Head of caudate nucleus (tissue), 42 donors: ENCODE measurements at regions of chr19 and their contacts with region 1.

Region 1: DNA sequence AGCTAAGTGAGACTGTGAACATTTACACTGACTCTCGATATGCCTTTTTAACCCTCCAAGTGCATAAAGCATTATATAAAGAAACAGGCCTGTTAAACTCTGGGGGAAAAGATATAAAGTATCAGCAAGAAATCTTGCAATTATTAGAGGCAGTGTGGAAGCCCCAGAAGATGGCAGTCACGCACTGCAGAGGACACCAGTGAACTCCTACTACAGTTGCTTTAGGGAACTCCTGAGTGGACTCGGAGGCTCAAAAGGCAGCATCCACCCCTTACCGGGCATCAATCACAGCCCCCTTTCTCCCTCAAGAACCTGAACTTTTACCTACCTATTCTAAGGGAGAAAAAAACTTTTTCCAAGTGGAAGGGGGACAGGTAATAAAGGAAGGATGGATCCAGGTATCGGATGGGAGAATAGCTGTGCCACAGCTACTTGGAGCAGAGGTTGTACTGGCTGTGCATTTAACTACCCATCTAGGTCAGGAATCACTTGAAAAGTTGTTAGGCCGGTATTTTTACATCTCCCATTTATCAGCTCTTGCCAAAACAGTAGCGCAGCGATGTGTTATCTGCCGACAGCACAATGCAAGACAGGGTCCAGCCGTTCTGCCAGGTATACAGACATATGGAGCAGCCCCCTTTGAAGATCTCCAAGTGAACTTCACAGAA is 80.1 kb downstream of the ZNF486 start:
- DNase-seq: peak; percentile 34 to 89 (median 75)

Region 2: DNA sequence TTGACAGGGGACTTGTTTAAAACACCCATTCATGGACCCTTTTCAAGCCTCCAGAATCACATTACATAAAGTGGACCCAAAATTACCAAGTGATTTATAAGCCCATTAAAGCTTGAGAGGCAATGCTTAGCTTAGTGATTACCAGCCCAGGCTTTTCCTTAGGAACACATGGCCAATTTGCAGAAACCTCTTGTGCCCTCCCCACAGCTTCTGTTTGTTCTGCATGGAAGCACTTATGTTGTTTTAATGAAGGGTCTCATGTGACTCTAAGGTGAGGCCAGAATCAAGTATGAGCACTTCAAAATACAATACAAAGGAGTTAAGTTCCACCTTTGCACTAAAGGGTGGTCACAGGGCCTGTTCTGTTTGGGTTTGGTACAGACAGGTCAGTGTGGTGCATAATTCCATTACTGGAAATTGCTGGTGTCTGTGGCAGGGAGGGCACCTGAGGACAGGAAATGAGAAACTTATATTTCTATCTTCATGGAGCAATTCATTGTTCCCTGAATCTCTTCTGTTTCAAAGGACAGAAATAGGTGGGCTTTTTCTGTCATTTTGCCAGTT is 64.8 kb before region 1 on chr19:
- intact Hi-C with region 1: no loop called
- DNase-seq: no peak

Region 3: DNA sequence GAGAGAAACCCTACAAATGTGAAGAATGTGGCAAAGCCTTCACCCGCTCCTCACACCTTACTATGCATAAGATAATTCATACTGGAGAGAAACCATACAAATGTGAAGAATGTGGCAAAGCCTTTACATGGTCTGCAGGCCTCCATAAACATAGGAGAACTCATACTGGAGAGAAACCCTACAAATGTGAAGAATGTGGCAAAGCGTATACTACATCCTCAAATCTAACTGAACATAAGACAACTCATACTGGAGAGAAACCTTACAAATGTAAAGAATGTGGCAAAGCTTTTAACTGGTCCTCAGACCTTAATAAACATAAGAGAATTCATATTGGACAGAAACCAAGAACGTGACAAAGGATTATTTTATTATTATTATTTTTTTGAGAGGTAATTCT is 49.4 kb before region 1 on chr19:
- intact Hi-C with region 1: no loop called
- DNase-seq: no peak

Region 4: DNA sequence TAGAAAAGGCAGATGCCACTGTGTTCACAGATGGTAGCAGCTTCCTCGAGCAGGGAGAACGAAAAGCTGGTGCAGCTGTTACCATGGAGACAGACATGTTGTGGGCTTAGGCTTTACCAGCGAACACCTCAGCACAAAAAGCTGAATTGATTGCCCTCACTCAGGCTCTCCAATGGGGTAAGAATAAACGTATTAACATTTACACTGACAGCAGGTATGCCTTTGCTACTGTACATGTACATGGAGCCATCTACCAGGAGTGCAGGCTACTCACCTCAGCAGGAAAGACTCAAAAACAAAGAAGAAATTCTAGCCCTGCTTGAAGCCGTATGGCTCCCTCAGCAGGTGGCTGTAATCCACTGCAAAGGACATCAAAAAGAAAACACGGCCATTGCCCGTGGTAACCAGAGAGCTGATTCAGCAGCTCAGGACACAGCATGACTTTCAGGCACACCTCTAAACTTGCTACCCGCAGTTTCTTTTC is 120.7 kb after region 1 on chr19:
- intact Hi-C with region 1: loop called (anchors 10 kb)
- DNase-seq: peak in 32 of 42 donors; percentile 13 to 79 (median 40)